HepG2 (cell line): ENCODE measurements at regions of chr4 and their contacts with region 1.

Region 1: GRCh38 chr4:22515145-22515887 is 550 bp downstream of the ADGRA3 start:
- DNase-seq: peak; percentile 86
- ATAC-seq: peak; percentile 85
- H3K4me3 ChIP-seq: peak overlapping the region; percentile 76 to 82 (median 78)
- H3K27ac ChIP-seq: peak overlapping the region; percentile 85
- H3K4me1 ChIP-seq: peaks cover 45% of the 10 kb centered on the region
- H3K27me3 ChIP-seq: no peaks in the 10 kb centered on the region; a peak in 1 of 5 replicates
- CTCF ChIP-seq: peak; percentile 57
- EP300 ChIP-seq: peak in 1 of 2 experiments; percentile 9; a peak in 1 of 4 replicates
- POLR2A ChIP-seq: peak; percentile 55 to 78; a peak in 3 of 4 replicates
- RAD21 ChIP-seq: no peak

Region 2: GRCh38 chr4:22454955-22455354 is 60.4 kb before region 1 on chr4:
- CTCF ChIA-PET with region 1: no interaction called
- POLR2A ChIA-PET with region 1: interaction called, 20 read pairs
- in situ Hi-C with region 1: no loop called
- intact Hi-C with region 1: loop called (anchors 1 kb)
- DNase-seq: no peak
- ATAC-seq: no peak
- H3K4me3 ChIP-seq: no peak overlapping the region
- H3K27ac ChIP-seq: peak overlapping the region; percentile 84
- H3K4me1 ChIP-seq: peaks cover 69% of the 10 kb centered on the region
- H3K27me3 ChIP-seq: no peaks in the 10 kb centered on the region
- CTCF ChIP-seq: no peak
- EP300 ChIP-seq: no peak
- POLR2A ChIP-seq: no peak
- RAD21 ChIP-seq: no peak

Region 3: DNA sequence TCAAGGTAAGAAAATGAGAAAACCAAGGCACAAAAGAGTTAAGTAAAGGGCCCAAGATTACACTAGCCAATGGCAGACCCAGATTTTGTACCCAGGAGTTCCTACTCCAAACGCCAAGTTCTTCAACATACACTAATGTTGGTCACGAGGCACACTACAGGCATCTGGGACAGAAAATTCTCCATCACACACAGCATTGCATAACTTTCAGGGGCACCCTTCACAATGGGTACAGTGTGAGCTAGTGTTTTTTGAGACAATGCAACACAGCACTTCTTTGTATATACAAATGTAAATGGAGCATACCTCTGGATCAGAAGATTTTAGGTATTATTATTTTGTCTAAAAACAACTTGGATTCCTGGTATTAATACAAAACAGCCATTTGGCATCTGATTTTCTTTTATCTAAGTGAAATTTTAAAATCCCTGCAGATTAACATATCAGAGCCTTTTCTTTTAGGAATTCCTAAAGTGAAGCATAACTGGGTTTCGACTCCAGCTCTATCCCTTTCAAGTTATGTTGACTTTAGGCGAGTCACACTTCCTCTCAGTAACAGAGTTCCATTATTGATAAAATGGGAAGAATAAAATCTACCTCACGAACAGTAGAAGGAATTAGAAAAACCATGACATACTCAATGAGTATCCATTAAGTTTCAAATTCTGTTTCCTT is 40.5 kb before region 1 on chr4:
- CTCF ChIA-PET with region 1: no interaction called
- POLR2A ChIA-PET with region 1: interaction called, 7 read pairs
- in situ Hi-C with region 1: no loop called
- intact Hi-C with region 1: loop called (anchors 2 kb)
- DNase-seq: peak; percentile 84
- ATAC-seq: peak; percentile 89
- H3K4me3 ChIP-seq: peak overlapping the region in 1 of 3 experiments; percentile 21; a peak in 2 of 6 replicates
- H3K27ac ChIP-seq: peak overlapping the region; percentile 55
- H3K4me1 ChIP-seq: peaks cover 53% of the 10 kb centered on the region
- H3K27me3 ChIP-seq: no peaks in the 10 kb centered on the region
- CTCF ChIP-seq: no peak
- EP300 ChIP-seq: 0 out of 4 replicates have a peak, but pooled peaks of 1 of the 2 experiments have one; percentile 25
- POLR2A ChIP-seq: no peak
- RAD21 ChIP-seq: no peak

Region 4: DNA sequence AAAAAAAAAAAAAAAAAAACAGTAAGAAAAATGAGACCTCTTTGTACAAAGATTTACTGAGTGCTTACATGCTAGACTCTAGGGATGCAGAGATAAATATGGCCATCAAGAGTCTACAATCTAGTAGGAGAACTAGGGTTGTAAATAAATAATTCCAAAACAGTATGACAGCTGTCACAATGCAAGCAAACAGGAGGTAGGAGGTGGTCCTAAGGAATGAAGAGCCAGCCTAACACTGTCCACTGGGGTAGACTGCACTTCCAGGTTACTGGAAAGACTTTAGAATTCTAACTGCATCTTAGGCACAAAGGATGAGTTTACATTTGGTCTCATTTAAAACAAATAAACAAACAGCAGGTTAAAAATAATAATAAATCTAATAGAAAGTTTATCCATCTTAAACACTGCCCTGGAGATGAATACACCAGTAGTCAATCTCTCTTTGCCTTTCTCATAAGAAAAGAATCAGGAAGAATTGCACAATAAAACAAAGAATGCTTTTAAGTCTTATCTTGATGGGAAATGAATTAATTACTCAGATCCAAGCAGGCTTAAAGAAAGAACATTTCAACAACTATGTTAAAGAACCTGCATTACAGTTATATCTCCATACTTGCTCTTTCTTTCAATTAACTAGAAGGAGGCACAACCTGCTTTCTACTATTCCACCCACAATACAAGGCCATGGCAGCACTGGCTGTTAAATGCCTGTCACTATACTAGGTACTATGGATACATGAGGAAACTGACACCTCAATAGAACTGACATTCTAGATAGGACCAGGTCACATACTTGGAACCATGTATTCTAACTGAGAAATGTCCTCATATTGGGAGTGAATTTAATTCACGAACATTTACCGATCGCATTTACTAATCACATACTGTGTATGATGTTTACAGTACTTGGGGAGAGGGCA is 12.2 kb before region 1 on chr4:
- CTCF ChIA-PET with region 1: no interaction called
- POLR2A ChIA-PET with region 1: interaction called, 12 read pairs
- in situ Hi-C with region 1: no loop called
- intact Hi-C with region 1: no loop called
- DNase-seq: no peak
- ATAC-seq: peak; percentile 41
- H3K4me3 ChIP-seq: no peak overlapping the region
- H3K27ac ChIP-seq: no peak overlapping the region
- H3K4me1 ChIP-seq: peaks cover 42% of the 10 kb centered on the region
- H3K27me3 ChIP-seq: no peaks in the 10 kb centered on the region
- CTCF ChIP-seq: no peak
- EP300 ChIP-seq: no peak
- POLR2A ChIP-seq: no peak
- RAD21 ChIP-seq: no peak

Region 5: GRCh38 chr4:22607382-22607781 is 92.1 kb after region 1 on chr4:
- CTCF ChIA-PET with region 1: no interaction called
- POLR2A ChIA-PET with region 1: no interaction called
- in situ Hi-C with region 1: no loop called
- intact Hi-C with region 1: loop called (anchors 5 kb)
- DNase-seq: peak; percentile 35
- ATAC-seq: peak; percentile 100
- H3K4me3 ChIP-seq: no peak overlapping the region
- H3K27ac ChIP-seq: no peak overlapping the region
- H3K4me1 ChIP-seq: no peaks in the 10 kb centered on the region
- H3K27me3 ChIP-seq: 0 out of 5 replicates have a peak, but pooled peaks cover 0 to 5% of the 10 kb centered on the region in 2 experiments
- CTCF ChIP-seq: peak; percentile 85
- EP300 ChIP-seq: no peak
- POLR2A ChIP-seq: no peak
- RAD21 ChIP-seq: peak; percentile 53; the same call in 1 of the 2 replicates

Region 6: GRCh38 chr4:22744478-22745062 is 229.3 kb after region 1 on chr4:
- CTCF ChIA-PET with region 1: no interaction called
- POLR2A ChIA-PET with region 1: no interaction called
- in situ Hi-C with region 1: no loop called
- intact Hi-C with region 1: no loop called
- DNase-seq: no peak
- ATAC-seq: no peak
- H3K4me3 ChIP-seq: no peak overlapping the region
- H3K27ac ChIP-seq: no peak overlapping the region
- H3K4me1 ChIP-seq: no peaks in the 10 kb centered on the region
- H3K27me3 ChIP-seq: no peaks in the 10 kb centered on the region
- CTCF ChIP-seq: no peak
- EP300 ChIP-seq: no peak
- POLR2A ChIP-seq: no peak
- RAD21 ChIP-seq: no peak